ENCODE measurements at regions of chr20 and their contacts with region 1.

Region 1: GRCh38 chr20:23420943-23421931 is at the start of gene NAPB:
- H3K4me3 ChIP-seq: peak within 1 kb of the TSS; percentile 95
- H3K27ac ChIP-seq: peak within 1 kb of the TSS; percentile 62; the same call in 1 of the 2 replicates
- H3K4me1 ChIP-seq: peaks cover 5% of the 10 kb centered on the region
- CTCF ChIP-seq: peak; percentile 90

Region 2: GRCh38 chr20:23350196-23350903 is 70.9 kb before region 1 on chr20 and contains the start of gene NXT1:
- CTCF ChIA-PET with region 1: interaction called, 6 read pairs
- POLR2A ChIA-PET with region 1: interaction called, 26 read pairs
- H3K4me3 ChIP-seq: peak within 1 kb of the TSS; percentile 77
- H3K27ac ChIP-seq: peak within 1 kb of the TSS; percentile 85
- H3K4me1 ChIP-seq: 0 out of 2 replicates have a peak, but pooled peaks cover 2% of the 10 kb centered on the region
- CTCF ChIP-seq: peak; percentile 70

Region 3: DNA sequence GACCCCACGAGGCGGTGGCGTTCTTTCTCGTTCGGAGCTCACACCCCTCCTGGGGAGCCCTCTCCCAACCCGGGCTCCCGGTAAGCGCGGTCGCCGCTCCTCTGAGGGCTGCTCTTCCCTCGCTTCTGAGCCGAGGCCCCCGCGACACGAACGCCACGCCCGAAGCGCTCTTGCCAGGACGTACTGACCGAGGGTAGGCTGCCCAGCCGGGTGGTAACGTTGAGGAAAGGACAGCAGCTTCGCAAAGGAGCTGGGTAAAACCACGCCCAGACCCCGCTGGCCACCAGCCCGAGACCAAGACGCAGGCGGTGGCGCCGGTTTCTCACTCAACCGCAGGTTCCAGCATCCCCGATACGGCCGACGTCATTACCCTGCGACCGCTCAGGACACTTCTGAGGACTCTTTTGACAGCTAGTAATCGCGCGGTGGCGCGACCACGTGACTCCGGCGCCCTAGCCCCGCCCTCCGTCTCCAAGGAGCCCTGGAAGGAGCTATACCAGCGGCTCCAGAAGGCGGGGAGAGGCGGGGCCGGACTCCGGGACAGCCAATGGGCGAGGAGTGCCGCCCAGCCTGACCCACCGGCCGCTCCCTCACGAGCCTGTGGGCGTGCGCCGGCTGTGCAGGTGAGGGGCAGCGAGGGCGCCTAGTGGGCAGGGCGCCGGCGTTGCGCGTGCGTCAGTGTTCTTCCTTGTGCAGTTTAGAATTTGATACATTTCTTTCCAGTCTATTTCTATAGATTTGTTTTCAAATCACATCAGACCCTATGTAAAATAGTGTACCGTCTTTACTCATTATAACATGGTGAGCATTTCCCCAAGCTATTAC is 63.3 kb before region 1 on chr20:
- CTCF ChIA-PET with region 1: no interaction called
- POLR2A ChIA-PET with region 1: interaction called, 21 read pairs
- H3K4me3 ChIP-seq: peak overlapping the region; percentile 76
- H3K27ac ChIP-seq: peak overlapping the region; percentile 86
- H3K4me1 ChIP-seq: peaks cover 7% of the 10 kb centered on the region; the same call in 1 of the 2 replicates
- CTCF ChIP-seq: no peak

Region 4: GRCh38 chr20:23441850-23442313 is 20.6 kb after region 1 on chr20:
- CTCF ChIA-PET with region 1: interaction called, 23 read pairs
- POLR2A ChIA-PET with region 1: no interaction called
- H3K4me3 ChIP-seq: no peak overlapping the region
- H3K27ac ChIP-seq: no peak overlapping the region
- H3K4me1 ChIP-seq: no peaks in the 10 kb centered on the region
- CTCF ChIP-seq: peak; percentile 71

Measured in HEK293 (cell line).